ENCODE measurements at regions of chr2 and their contacts with region 1.

Region 1: DNA sequence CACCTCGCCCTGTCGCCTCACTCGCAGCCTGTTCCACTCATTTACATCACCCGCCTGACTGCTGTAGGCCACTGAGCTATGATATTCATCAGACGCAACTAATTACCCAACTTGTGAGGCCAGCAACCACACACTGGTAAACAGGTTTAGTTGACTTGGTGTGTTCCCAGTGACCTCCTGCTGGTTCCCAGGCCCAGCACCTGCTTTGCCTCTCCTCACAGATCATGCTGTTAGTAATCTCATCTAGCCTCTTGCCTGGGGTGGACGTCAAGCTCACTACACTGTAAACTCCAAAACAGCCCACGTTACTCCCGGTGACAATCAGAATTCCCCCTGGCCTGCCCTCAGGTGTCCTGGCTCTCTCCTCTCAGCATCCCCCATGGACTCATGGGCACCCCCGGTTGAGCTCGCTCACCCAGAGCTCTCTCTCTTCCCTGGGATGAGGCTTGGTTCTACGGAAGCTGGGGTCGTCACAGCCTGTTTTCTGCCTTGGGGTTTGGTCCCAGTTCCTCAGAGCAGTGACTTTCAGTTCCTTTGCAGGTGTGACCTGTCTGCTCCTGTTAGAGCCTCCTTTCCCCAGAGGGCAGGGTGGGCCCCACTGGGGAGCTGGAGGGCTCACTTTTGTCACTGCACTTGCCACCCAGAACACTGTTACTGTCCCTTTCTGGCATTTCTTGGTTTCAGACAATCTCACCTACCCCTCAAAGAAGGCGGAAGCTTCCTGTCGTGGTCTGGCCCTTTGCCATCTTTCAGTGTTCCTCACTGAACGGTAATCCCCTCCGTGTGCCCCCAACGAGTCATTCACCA is 40.3 kb downstream of the INPP5D start:
- DNase-seq: peak; percentile 49 to 82 (median 59)
- H3K4me3 ChIP-seq: no peak overlapping the region
- H3K4me3 Mint-ChIP-seq: peak overlapping the region; percentile 43 to 88 (median 76)
- H3K27ac ChIP-seq: peak overlapping the region; percentile 41
- H3K27ac Mint-ChIP-seq: peak overlapping the region; percentile 77 to 96 (median 87)
- H3K4me1 ChIP-seq: peaks cover 64% of the 10 kb centered on the region
- H3K4me1 Mint-ChIP-seq: peaks cover 50 to 84% (median 66%) of the 10 kb centered on the region in 4 donors
- H3K27me3 ChIP-seq: no peaks in the 10 kb centered on the region
- H3K27me3 Mint-ChIP-seq: no peaks in the 10 kb centered on the region

Region 2: DNA sequence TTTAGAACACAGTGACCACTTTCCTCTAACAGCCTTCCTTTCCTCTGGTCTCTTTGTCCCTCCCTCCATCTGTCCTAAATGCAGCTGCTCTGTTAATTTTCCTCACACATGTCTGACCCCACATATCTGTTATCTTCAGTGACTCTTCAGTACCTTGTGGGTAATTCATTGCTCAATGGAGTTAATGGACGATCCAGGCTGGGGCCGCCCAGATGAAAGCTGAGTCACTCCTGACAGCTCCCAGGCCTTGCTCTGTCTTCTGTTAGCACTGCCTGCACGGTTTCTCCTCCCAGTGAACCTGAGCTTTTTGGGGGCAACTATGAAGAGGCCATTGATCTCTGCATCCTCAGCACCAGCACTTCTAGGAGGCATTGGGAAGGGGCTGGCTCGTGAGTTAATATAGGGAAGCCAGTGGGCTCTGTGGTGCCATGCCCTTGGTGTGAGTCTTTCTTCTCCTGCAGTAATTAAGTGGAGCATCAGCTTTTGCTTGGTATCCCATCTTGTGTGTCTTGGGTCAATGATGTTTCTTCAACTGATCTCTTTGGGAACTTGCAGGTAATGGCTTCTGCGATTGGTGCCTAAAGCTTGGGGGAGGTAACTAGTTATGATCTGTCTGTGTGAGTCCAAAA is 163.0 kb before region 1 on chr2:
- CTCF ChIA-PET with region 1: no interaction called
- POLR2A ChIA-PET with region 1: no interaction called
- intact Hi-C with region 1: no loop called
- DNase-seq: no peak
- H3K4me3 ChIP-seq: no peak overlapping the region
- H3K4me3 Mint-ChIP-seq: no peak overlapping the region
- H3K27ac ChIP-seq: no peak overlapping the region
- H3K27ac Mint-ChIP-seq: peak overlapping the region in 2 of 7 donors; percentile 2 to 20
- H3K4me1 ChIP-seq: no peaks in the 10 kb centered on the region
- H3K4me1 Mint-ChIP-seq: peaks cover 0 to 8% (median 4%) of the 10 kb centered on the region in 4 donors
- H3K27me3 ChIP-seq: no peaks in the 10 kb centered on the region
- H3K27me3 Mint-ChIP-seq: peaks cover 9 to 22% of the 10 kb centered on the region in 2 donors

Region 3: GRCh38 chr2:233084488-233084887 is 15.9 kb before region 1 on chr2:
- CTCF ChIA-PET with region 1: interaction called, 8 read pairs
- POLR2A ChIA-PET with region 1: interaction called, 37 read pairs
- intact Hi-C with region 1: no loop called
- DNase-seq: peak; percentile 55 to 87 (median 63)
- H3K4me3 ChIP-seq: no peak overlapping the region
- H3K4me3 Mint-ChIP-seq: peak overlapping the region; percentile 80 to 95 (median 84)
- H3K27ac ChIP-seq: peak overlapping the region; percentile 67
- H3K27ac Mint-ChIP-seq: peak overlapping the region in 6 of 7 donors; percentile 94 to 98 (median 97)
- H3K4me1 ChIP-seq: peaks cover 89% of the 10 kb centered on the region
- H3K4me1 Mint-ChIP-seq: peaks cover 73 to 99% (median 87%) of the 10 kb centered on the region in 4 donors
- H3K27me3 ChIP-seq: no peaks in the 10 kb centered on the region
- H3K27me3 Mint-ChIP-seq: peaks cover 0 to 1% of the 10 kb centered on the region in 2 donors

Measured in CD4-positive, alpha-beta memory T cell (primary cell).